ENCODE measurements at regions of chr18 and their contacts with region 1.

Region 1: GRCh38 chr18:79523736-79524180 is 128.0 kb downstream of the NFATC1 start:
- DNase-seq: peak in 13 of 14 experiments; percentile 45 to 91 (median 61)
- ATAC-seq: peak; percentile 52
- H3K4me3 ChIP-seq: peak overlapping the region; percentile 48
- H3K4me3 Mint-ChIP-seq: peak overlapping the region; percentile 92
- H3K27ac ChIP-seq: peak overlapping the region; percentile 84 to 92
- H3K27ac Mint-ChIP-seq: peak overlapping the region; percentile 96
- H3K4me1 ChIP-seq: peaks cover 77% of the 10 kb centered on the region
- H3K4me1 Mint-ChIP-seq: peaks cover 82% of the 10 kb centered on the region
- H3K27me3 ChIP-seq: no peaks in the 10 kb centered on the region
- H3K27me3 Mint-ChIP-seq: no peaks in the 10 kb centered on the region
- CTCF ChIP-seq: no peak

Region 2: GRCh38 chr18:79400091-79400590 is 123.6 kb before region 1 on chr18:
- CTCF ChIA-PET with region 1: interaction called, 7 read pairs
- POLR2A ChIA-PET with region 1: interaction called, 51 read pairs
- intact Hi-C with region 1: loop called (anchors 2 to 5 kb)
- DNase-seq: peak; percentile 53 to 86 (median 70)
- ATAC-seq: peak; percentile 5
- H3K4me3 ChIP-seq: peak overlapping the region; percentile 63
- H3K4me3 Mint-ChIP-seq: no peak overlapping the region
- H3K27ac ChIP-seq: peak overlapping the region; percentile 58 to 86
- H3K27ac Mint-ChIP-seq: no peak overlapping the region
- H3K4me1 ChIP-seq: peaks cover 76% of the 10 kb centered on the region
- H3K4me1 Mint-ChIP-seq: peaks cover 56% of the 10 kb centered on the region
- H3K27me3 ChIP-seq: no peaks in the 10 kb centered on the region
- H3K27me3 Mint-ChIP-seq: no peaks in the 10 kb centered on the region
- CTCF ChIP-seq: no peak

Region 3: DNA sequence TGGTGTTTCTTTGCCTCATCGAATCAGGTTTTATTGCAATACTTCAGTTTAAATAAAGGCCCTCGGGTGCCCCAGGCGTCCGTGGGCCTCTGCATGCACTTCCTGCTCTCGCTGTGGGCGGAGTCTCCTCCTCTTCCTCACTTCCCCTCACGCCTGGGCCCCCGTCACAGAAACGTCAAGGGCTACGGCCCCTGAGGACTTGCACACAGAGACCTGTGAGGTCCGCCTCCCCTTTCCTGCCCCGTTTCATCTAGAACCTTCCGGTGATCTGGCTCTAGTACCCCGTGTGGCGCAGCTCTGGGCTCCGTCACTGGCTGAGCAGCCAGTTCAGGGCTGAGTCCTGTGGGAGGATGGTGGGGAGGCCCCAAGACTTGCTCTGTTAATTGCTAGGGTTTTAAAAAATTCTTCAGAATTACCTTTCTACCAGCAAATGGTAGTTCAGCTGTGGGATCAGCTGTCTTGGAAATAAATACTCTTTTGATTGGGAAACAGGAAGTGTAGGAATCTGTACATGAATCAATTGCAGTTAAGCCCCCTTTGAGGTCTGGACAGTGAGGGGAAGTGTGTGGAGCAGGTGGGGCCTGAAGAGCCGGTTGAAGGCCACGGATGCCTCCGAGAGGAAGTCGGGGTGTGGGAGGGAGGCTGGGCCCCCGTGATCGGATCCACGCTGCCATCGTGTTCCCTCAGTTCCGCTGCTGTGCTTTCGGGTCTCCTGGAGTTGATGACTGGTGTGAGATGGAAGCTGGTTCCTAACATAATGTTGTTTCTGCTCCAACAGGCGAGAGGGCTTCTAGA is 117.8 kb before region 1 on chr18:
- CTCF ChIA-PET with region 1: interaction called, 7 read pairs
- POLR2A ChIA-PET with region 1: interaction called, 51 read pairs
- intact Hi-C with region 1: no loop called
- DNase-seq: peak; percentile 78 to 98 (median 86)
- ATAC-seq: peak; percentile 76
- H3K4me3 ChIP-seq: peak overlapping the region; percentile 40
- H3K4me3 Mint-ChIP-seq: peak overlapping the region; percentile 90
- H3K27ac ChIP-seq: peak overlapping the region; percentile 92 to 97
- H3K27ac Mint-ChIP-seq: peak overlapping the region; percentile 96
- H3K4me1 ChIP-seq: peaks cover 63% of the 10 kb centered on the region
- H3K4me1 Mint-ChIP-seq: peaks cover 56% of the 10 kb centered on the region
- H3K27me3 ChIP-seq: no peaks in the 10 kb centered on the region
- H3K27me3 Mint-ChIP-seq: no peaks in the 10 kb centered on the region
- CTCF ChIP-seq: peak; percentile 16

Region 4: GRCh38 chr18:79439201-79440023 is 84.3 kb before region 1 on chr18:
- CTCF ChIA-PET with region 1: no interaction called
- POLR2A ChIA-PET with region 1: interaction called, 4 read pairs
- intact Hi-C with region 1: loop called in 1 of 2 experiments (anchors 2 kb)
- DNase-seq: peak in 13 of 14 experiments; percentile 10 to 77 (median 41)
- ATAC-seq: peak; percentile 51
- H3K4me3 ChIP-seq: no peak overlapping the region
- H3K4me3 Mint-ChIP-seq: peak overlapping the region; percentile 39
- H3K27ac ChIP-seq: no peak overlapping the region
- H3K27ac Mint-ChIP-seq: peak overlapping the region; percentile 81
- H3K4me1 ChIP-seq: peaks cover 66% of the 10 kb centered on the region
- H3K4me1 Mint-ChIP-seq: peaks cover 56% of the 10 kb centered on the region
- H3K27me3 ChIP-seq: no peaks in the 10 kb centered on the region
- H3K27me3 Mint-ChIP-seq: no peaks in the 10 kb centered on the region
- CTCF ChIP-seq: no peak

Region 5: DNA sequence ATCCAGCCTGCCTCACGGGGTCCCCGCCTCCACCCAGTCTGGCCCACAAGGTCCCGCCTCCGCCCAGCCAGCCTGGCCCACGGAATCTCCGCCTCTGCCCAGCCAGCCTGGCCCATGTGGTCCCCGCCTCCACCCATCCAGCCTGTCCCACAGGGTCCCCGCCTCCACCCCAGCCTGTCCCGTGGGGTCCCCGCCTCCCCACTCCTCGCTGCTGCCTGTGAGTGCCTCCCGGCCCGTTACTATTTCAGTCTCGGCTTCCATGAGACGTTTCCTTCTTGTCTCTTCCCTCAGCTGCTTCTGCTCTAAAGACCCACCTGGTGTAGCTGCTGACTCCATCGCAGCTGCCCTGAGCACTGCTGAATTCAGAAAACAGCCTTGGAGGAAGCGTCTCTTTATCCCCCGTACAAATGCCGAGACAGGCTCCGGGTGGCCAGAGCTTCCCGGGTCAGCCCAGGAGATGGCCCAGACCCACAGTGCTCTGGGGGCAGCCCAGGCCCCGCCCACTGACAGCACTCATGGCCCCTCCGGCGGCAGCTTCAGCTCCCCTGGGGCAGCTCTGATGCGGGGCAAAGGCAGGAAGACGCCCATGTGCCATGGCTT is 58.3 kb before region 1 on chr18:
- CTCF ChIA-PET with region 1: no interaction called
- POLR2A ChIA-PET with region 1: interaction called, 3 read pairs
- intact Hi-C with region 1: loop called in 1 of 2 experiments (anchors 5 kb)
- DNase-seq: no peak
- ATAC-seq: no peak
- H3K4me3 ChIP-seq: no peak overlapping the region
- H3K4me3 Mint-ChIP-seq: no peak overlapping the region
- H3K27ac ChIP-seq: no peak overlapping the region
- H3K27ac Mint-ChIP-seq: peak overlapping the region; percentile 24
- H3K4me1 ChIP-seq: peaks cover 2% of the 10 kb centered on the region
- H3K4me1 Mint-ChIP-seq: peaks cover 6% of the 10 kb centered on the region
- H3K27me3 ChIP-seq: no peaks in the 10 kb centered on the region
- H3K27me3 Mint-ChIP-seq: no peaks in the 10 kb centered on the region
- CTCF ChIP-seq: no peak

Region 6: GRCh38 chr18:79507076-79507545 is 16.6 kb before region 1 on chr18:
- CTCF ChIA-PET with region 1: no interaction called
- POLR2A ChIA-PET with region 1: interaction called, 43 read pairs
- intact Hi-C with region 1: loop called in 1 of 2 experiments (anchors 2 kb)
- DNase-seq: peak in 8 of 14 experiments; percentile 2 to 54 (median 39)
- ATAC-seq: peak; percentile 67
- H3K4me3 ChIP-seq: peak overlapping the region; percentile 46
- H3K4me3 Mint-ChIP-seq: peak overlapping the region; percentile 79
- H3K27ac ChIP-seq: peak overlapping the region; percentile 66 to 72
- H3K27ac Mint-ChIP-seq: peak overlapping the region; percentile 94
- H3K4me1 ChIP-seq: peaks cover 53% of the 10 kb centered on the region
- H3K4me1 Mint-ChIP-seq: peaks cover 68% of the 10 kb centered on the region
- H3K27me3 ChIP-seq: no peaks in the 10 kb centered on the region
- H3K27me3 Mint-ChIP-seq: no peaks in the 10 kb centered on the region
- CTCF ChIP-seq: no peak

Region 7: DNA sequence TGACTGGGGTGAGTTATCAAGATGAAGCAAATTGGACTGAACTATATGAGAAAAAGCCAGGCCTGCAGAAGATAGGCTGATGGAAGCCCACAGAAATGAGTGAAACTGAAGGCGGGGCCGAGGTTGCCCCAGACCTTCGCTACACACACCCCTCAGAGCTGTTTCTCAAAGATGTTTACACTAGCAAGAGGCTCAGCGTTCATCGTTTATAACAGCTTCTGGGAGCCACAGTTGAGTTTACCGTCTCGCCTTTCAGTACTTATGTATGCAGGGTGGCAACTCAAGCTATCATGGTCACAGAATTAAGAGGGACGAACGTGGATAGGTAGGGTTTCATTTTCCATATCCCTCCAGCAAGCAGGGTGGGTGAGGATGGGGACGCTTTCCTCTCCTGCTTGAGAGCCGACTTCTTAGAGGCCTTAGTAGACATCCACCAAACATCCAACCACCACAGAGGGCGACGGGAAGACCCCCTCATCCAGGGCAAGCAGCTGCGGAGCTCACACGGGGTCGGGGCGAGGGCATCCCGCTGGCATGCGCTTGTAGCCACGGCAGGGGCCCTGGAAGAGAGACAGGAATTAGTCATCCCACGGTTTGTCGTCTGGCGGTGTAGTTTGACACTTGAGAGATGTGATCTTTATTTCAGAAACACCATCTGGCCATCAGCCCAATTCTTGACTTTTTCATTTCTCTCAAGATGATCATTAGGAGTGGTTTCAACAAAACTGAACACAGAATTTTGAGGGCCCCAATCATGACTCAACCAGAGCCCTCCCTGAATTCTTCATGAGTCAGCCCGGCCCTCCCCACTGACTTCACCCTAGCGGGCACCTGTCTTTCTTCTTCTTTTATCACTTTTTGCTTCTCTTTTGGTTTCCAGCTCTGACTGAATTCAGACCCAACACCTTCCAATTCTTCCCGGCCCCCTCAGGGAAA is 46.8 kb after region 1 on chr18:
- CTCF ChIA-PET with region 1: no interaction called
- POLR2A ChIA-PET with region 1: no interaction called
- intact Hi-C with region 1: no loop called
- DNase-seq: peak in 1 of 14 experiments; percentile 23
- ATAC-seq: no peak
- H3K4me3 ChIP-seq: no peak overlapping the region
- H3K4me3 Mint-ChIP-seq: no peak overlapping the region
- H3K27ac ChIP-seq: no peak overlapping the region
- H3K27ac Mint-ChIP-seq: no peak overlapping the region
- H3K4me1 ChIP-seq: peaks cover 11% of the 10 kb centered on the region
- H3K4me1 Mint-ChIP-seq: peaks cover 9% of the 10 kb centered on the region
- H3K27me3 ChIP-seq: no peaks in the 10 kb centered on the region
- H3K27me3 Mint-ChIP-seq: no peaks in the 10 kb centered on the region
- CTCF ChIP-seq: no peak

Measured in CD4-positive, alpha-beta T cell (primary cell).